ENCODE measurements at regions of chr2 and their contacts with region 1.

Region 1: DNA sequence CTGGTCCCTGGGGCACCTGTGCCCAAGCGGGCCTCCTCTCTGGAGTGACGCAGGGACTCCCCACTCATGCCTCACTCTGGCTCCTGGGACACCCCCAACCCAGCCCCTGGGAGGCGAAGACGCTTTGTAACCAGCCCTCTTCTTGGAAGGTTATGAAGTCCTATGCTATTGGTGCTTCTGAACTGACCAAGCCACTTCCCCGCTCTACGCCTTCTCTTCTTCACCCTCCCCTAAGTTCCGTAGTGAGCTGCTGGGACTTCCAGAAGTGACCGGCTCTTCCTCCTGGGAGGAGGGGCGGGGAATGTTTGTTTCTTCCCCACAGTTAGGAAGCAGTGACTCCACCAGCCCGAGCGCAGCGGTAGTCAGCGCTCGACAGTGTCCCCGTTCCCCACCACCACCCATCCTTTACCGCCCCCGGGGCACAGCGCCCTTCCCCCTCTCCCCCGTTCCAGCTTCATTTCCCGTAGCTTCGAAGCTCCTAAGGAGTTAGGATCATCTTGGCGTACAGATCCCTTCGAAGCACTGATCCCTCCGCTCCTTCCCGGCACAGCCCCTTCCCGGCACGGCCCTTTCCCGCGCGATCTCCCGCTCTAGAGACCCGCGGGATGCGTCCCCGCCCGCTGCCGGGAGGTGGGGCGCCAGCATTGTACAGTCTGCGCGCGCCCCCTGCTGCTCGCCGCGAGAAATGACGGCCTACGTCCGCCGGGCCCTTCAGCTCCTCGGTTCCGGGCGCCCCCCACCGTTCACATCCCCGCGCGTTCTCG is 25.3 kb upstream of the NOTO start:
- DNase-seq: peak; percentile 92
- ATAC-seq: peak; percentile 72
- H3K4me3 Mint-ChIP-seq: peak overlapping the region; percentile 86
- H3K27ac Mint-ChIP-seq: no peak overlapping the region
- H3K4me1 Mint-ChIP-seq: peaks cover 22% of the 10 kb centered on the region
- H3K27me3 Mint-ChIP-seq: peaks cover 95% of the 10 kb centered on the region
- CTCF ChIP-seq: peak; percentile 83

Region 2: DNA sequence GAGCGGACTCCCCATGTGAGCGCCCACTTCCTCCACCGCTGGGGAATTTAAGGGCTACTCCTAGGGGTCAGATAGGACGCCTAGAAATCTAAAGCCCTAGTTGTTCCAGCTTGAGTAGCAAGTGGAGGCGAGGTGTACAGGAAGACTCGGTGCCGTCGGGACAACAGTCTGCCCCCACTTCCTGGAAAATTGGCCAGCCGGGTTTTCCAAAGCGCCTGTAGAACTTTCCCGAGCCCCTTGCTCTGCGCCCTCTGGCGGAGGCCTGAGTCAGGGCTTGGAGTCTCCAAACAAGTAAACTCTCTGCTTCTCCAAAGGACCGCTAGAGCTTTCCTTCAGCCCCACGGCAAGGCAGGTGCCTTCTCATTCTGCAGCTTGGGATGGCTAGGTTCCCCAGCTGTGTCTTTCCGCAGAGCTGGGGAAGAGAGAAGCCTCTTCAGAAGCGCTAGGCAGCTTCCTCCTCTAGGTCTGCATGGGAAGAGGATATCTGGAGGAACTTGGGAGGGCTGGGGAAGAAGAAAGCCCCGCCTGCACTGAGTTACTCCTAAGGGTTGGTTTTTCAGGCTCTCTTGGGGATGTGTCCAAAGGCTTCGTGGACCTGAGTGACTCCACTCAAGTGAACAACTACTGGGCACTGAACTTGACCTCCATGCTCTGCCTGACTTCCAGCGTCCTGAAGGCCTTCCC is 289.2 kb before region 1 on chr2:
- CTCF ChIA-PET with region 1: interaction called, 98 read pairs
- POLR2A ChIA-PET with region 1: interaction called, 4 read pairs
- DNase-seq: peak; percentile 97
- ATAC-seq: peak; percentile 68
- H3K4me3 Mint-ChIP-seq: peak overlapping the region; percentile 67
- H3K27ac Mint-ChIP-seq: no peak overlapping the region
- H3K4me1 Mint-ChIP-seq: peaks cover 18% of the 10 kb centered on the region
- H3K27me3 Mint-ChIP-seq: peaks cover 58% of the 10 kb centered on the region
- CTCF ChIP-seq: peak; percentile 82

Region 3: DNA sequence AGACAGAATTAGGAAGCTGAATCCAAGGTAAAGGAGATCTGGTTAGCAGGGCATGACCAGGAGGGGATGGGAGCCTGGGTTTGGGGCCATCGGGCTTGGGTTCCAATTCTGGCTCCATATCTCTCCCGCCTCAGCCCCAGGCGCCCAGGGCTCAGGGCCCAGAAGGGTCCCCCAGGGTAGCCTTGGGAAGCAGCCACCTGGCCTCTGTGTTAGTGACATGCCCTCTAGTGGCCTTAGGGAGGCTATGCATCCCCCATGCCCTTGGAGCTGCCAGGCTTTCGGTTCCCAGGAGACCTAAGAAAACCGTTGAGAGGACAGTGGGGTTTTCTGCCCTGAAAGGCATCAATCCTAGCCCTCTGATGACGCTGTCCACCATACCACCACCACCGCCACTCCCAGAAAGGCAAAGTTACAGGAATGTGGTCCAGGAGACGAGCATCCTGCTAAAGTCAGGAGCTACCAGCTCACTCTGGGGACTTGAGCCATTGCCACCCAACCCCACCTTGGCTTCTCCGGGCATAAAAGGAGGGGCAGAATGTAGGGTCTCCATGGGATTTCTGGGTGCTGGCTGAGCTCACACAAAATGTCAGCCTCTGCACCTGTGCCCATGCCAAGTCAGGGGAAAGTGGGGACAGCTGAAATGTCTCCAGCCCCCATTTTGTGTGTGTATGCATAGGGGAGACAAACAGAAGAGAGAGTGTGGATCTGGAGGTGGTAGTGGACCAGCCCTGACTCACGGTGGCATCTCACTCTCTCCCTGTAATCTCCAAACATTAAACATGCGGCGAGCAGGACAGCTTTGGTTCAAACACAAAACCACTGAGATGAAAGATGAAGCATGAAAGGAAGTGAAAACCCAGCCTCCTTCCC is 203.3 kb before region 1 on chr2:
- CTCF ChIA-PET with region 1: interaction called, 24 read pairs
- POLR2A ChIA-PET with region 1: no interaction called
- DNase-seq: peak; percentile 78
- ATAC-seq: peak; percentile 95
- H3K4me3 Mint-ChIP-seq: no peak overlapping the region
- H3K27ac Mint-ChIP-seq: no peak overlapping the region
- H3K4me1 Mint-ChIP-seq: peaks cover 46% of the 10 kb centered on the region
- H3K27me3 Mint-ChIP-seq: no peaks in the 10 kb centered on the region
- CTCF ChIP-seq: peak; percentile 81

Region 4: GRCh38 chr2:73063909-73064875 is 112.9 kb before region 1 on chr2:
- CTCF ChIA-PET with region 1: interaction called, 14 read pairs
- POLR2A ChIA-PET with region 1: no interaction called
- DNase-seq: peak; percentile 35
- ATAC-seq: peak; percentile 76
- H3K4me3 Mint-ChIP-seq: 0 out of 2 replicates have a peak overlapping the region, but pooled peaks have one; percentile 13
- H3K27ac Mint-ChIP-seq: peak overlapping the region; percentile 90
- H3K4me1 Mint-ChIP-seq: peaks cover 34% of the 10 kb centered on the region
- H3K27me3 Mint-ChIP-seq: no peaks in the 10 kb centered on the region
- CTCF ChIP-seq: no peak

Region 5: DNA sequence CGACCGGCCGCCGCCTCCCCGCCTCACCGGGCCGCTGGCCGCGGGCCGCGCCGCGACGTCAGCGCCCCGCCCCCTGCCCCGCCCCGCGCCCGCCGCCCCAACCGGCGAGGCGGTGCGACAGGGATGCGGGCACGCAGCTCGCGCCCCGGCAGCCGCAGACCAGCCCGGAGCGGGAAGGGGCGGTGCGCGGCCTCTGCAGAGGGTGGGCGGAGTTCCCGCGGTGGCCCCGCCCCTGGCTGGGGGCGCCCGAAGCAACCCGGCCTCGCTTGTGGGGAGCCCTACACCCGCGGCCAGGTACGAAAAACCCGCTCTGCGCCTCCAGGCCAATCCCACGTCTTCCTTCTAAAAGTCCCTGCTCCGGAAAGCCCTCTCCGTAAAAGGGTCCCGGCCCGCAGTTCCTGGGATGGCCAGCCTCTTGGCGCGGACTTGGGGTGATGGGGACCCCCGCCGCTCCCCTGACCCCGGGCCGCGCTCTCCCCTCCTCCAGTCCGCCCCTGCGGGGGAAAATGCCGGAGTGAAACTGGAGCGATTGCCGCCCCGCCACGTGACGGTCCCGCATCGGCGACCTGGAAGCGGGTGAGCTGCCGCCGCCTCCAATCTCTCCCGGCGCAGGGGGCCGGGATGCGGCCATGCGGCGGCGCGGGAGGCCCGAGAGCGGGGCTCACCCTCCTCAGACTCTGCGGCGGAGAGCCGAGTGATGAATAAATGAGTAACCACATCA is 64.0 kb before region 1 on chr2 and contains the start of gene RAB11FIP5:
- CTCF ChIA-PET with region 1: interaction called, 30 read pairs
- POLR2A ChIA-PET with region 1: no interaction called
- DNase-seq: peak; percentile 86
- ATAC-seq: peak; percentile 87
- H3K4me3 Mint-ChIP-seq: peak within 1 kb of the TSS; percentile 83
- H3K27ac Mint-ChIP-seq: no peak within 1 kb of the TSS
- H3K4me1 Mint-ChIP-seq: peaks cover 23% of the 10 kb centered on the region
- H3K27me3 Mint-ChIP-seq: peaks cover 26% of the 10 kb centered on the region
- CTCF ChIP-seq: no peak
- total RNA-seq, gene RAB11FIP5: 14.0 to 16.0 TPM (median 14.3 TPM) in 3 replicates

Region 6: GRCh38 chr2:73202156-73203054 is 25.3 kb after region 1 on chr2 and contains the start of gene NOTO:
- CTCF ChIA-PET with region 1: interaction called, 179 read pairs
- POLR2A ChIA-PET with region 1: no interaction called
- DNase-seq: peak; percentile 65
- ATAC-seq: peak; percentile 77
- H3K4me3 Mint-ChIP-seq: peak within 1 kb of the TSS; percentile 61
- H3K27ac Mint-ChIP-seq: no peak within 1 kb of the TSS
- H3K4me1 Mint-ChIP-seq: peaks cover 8% of the 10 kb centered on the region
- H3K27me3 Mint-ChIP-seq: peaks cover 88% of the 10 kb centered on the region
- CTCF ChIP-seq: no peak
- total RNA-seq, gene NOTO: 0.15 to 0.23 TPM (median 0.18 TPM) in 3 replicates